ENCODE measurements at regions of chr2 and their contacts with region 1.

Region 1: GRCh38 chr2:154855085-154855484 is 156.6 kb downstream of the KCNJ3 start:
- DNase-seq: no peak
- H3K4me3 Mint-ChIP-seq: no peak overlapping the region
- H3K27ac Mint-ChIP-seq: no peak overlapping the region
- H3K4me1 Mint-ChIP-seq: no peaks in the 10 kb centered on the region
- H3K27me3 Mint-ChIP-seq: no peaks in the 10 kb centered on the region

Region 2: DNA sequence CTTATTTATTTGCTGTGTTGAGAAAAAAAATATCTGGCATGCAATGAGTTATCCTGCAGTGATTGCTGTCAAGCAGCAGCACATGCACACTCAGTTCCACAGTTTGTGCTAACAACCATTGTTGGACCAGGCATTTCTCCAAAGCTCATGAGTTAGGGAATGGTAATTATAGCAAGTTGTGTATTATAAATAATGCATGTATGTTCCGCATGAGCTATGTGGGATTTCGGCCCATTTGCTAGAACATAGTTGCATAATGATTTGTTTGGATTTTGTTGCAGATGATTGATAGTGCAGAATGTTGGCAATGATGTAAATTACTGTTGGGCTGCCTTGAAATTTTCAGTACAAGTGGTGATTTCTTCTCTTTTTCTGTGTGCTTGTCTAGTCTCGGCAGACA is 145.9 kb before region 1 on chr2:
- CTCF ChIA-PET with region 1: no interaction called
- intact Hi-C with region 1: no loop called
- DNase-seq: no peak
- H3K4me3 Mint-ChIP-seq: no peak overlapping the region
- H3K27ac Mint-ChIP-seq: no peak overlapping the region
- H3K4me1 Mint-ChIP-seq: no peaks in the 10 kb centered on the region
- H3K27me3 Mint-ChIP-seq: no peaks in the 10 kb centered on the region

Region 3: DNA sequence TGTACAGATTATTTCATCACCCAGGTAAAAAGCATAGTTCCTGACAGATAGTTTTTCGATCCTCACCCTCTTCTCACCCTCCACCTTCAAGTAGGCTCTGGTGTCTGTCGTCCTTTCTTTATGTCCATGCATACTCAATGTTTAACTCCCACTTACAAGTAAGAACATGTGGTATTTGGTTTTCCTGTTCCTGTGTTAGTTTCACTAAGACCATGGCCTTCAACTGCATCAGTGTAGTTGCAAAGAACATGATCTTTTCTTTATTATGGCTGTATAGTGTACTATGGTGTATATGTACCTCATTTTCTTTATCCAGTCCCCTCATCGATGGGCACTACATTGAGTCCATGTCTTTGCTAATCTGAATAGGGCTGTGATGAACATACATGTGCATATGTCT is 27.6 kb after region 1 on chr2:
- CTCF ChIA-PET with region 1: no interaction called
- intact Hi-C with region 1: loop called (anchors 1 kb)
- DNase-seq: no peak
- H3K4me3 Mint-ChIP-seq: no peak overlapping the region
- H3K27ac Mint-ChIP-seq: no peak overlapping the region
- H3K4me1 Mint-ChIP-seq: no peaks in the 10 kb centered on the region
- H3K27me3 Mint-ChIP-seq: no peaks in the 10 kb centered on the region

Region 4: DNA sequence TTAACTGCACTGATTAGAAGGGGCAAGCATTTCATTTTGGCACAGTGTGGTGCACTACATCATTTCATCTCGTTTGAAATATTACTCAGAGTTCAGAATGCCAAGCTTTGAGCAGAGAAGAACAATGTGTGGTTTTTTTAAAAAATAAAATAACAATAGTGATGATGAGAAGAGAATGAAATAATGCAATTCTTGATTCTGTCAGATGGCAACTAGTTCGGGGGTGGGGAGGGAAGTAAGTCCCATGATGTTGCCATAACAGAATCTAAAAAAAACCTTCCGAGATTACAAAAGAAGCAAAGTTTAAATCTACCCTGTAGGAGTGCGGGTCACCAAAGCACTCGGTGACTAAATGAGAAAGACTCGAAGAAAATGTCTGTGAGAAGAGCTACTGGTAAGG is 987.0 kb after region 1 on chr2:
- CTCF ChIA-PET with region 1: no interaction called
- intact Hi-C with region 1: no loop called
- DNase-seq: no peak
- H3K4me3 Mint-ChIP-seq: no peak overlapping the region
- H3K27ac Mint-ChIP-seq: no peak overlapping the region
- H3K4me1 Mint-ChIP-seq: no peaks in the 10 kb centered on the region
- H3K27me3 Mint-ChIP-seq: no peaks in the 10 kb centered on the region